HEK293 (cell line): ENCODE measurements at regions of chr6 and their contacts with region 1.

Region 1: GRCh38 chr6:136792410-136793262 is at the start of gene MAP3K5:
- H3K4me3 ChIP-seq: peak within 1 kb of the TSS; percentile 54
- H3K27ac ChIP-seq: peak within 1 kb of the TSS; percentile 89
- H3K4me1 ChIP-seq: peaks cover 13% of the 10 kb centered on the region
- CTCF ChIP-seq: peak; percentile 96

Region 2: GRCh38 chr6:136607932-136608772 is 184.5 kb before region 1 on chr6:
- CTCF ChIA-PET with region 1: interaction called, 25 read pairs
- POLR2A ChIA-PET with region 1: interaction called, 5 read pairs
- H3K4me3 ChIP-seq: no peak overlapping the region
- H3K27ac ChIP-seq: no peak overlapping the region
- H3K4me1 ChIP-seq: peaks cover 26% of the 10 kb centered on the region
- CTCF ChIP-seq: peak; percentile 67

Region 3: GRCh38 chr6:136701045-136701444 is 91.6 kb before region 1 on chr6:
- CTCF ChIA-PET with region 1: interaction called, 13 read pairs
- POLR2A ChIA-PET with region 1: no interaction called
- H3K4me3 ChIP-seq: no peak overlapping the region
- H3K27ac ChIP-seq: no peak overlapping the region
- H3K4me1 ChIP-seq: peaks cover 2% of the 10 kb centered on the region; the same call in 1 of the 2 replicates
- CTCF ChIP-seq: no peak

Region 4: DNA sequence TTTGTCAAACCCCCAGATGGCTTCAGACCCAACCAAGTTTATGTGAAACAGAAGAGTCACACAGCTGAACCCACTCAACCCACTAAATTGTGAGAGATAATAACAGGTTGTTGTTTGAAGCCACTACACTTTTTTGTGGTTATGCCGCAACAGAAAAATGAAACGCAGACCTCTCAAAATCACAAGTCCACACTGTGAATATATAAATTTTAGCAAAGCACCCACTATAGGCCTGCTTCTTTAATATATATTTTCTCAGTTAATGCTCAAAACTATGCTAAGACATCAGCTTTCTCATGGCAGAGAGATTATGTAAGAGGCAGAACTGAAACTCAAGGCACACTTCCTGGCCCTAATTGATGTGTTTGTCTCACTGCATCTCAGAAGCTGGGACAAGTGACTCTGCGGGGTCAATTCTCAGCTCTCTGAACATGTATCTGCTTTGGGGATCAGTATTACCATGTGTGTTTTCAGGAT is 28.1 kb before region 1 on chr6:
- CTCF ChIA-PET with region 1: interaction called, 11 read pairs
- POLR2A ChIA-PET with region 1: no interaction called
- H3K4me3 ChIP-seq: no peak overlapping the region
- H3K27ac ChIP-seq: no peak overlapping the region
- H3K4me1 ChIP-seq: peaks cover 13% of the 10 kb centered on the region
- CTCF ChIP-seq: no peak

Region 5: DNA sequence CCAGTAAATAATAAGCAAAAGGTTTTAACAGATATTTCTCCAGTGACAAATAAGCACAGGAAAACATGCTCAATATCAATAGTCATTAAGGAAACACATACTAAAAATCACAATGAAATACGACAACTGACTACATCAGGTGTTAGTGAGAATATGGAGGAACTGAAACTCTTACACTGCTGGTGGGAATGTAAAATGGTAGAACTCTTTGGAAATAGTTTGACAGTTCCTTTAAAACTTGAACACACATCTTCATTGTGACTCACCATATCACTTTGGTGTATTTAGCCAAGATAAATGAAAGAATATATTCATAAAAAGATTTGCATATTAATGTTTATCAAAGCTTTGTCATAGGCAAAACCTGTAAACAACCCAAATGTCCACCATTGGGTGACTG is 11.0 kb after region 1 on chr6:
- CTCF ChIA-PET with region 1: interaction called, 22 read pairs
- POLR2A ChIA-PET with region 1: interaction called, 5 read pairs
- H3K4me3 ChIP-seq: no peak overlapping the region
- H3K27ac ChIP-seq: no peak overlapping the region
- H3K4me1 ChIP-seq: no peaks in the 10 kb centered on the region
- CTCF ChIP-seq: no peak

Region 6: DNA sequence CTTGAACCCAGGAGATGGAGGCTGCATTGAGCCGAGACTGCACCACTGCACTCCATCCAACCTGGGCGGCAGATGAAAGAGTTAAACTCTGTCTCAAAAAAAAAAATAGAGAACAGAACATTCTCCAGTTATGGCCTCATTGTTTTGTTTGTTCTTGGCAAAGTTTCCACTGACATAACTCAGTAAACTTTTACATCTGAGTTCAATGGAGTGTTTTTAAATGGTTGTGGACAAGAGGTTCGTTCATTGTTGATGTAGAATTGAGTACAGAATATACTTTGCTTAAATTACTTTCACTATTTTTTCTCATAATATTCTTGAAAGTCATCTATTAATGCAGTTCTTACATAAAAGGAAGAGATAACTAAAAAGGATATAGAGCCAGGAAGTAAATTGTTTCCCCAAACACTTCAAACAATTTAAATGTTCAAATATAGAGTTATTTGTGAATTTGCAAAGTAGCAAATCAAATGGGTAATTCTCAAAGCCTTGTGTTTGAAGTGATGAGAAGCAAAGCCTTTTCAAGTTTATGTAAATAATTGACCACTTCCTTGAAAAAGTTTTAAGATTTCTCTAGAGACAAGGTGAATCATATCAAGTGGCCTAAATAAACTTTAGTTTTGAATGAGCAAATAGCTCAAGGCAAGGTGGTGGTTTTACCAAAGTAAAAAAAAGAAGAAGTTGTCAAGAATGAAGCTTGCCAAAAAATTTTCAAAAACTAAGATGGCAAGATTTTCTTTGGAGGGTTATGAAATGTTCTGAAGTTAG is 468.9 kb after region 1 on chr6:
- CTCF ChIA-PET with region 1: no interaction called
- POLR2A ChIA-PET with region 1: no interaction called
- H3K4me3 ChIP-seq: no peak overlapping the region
- H3K27ac ChIP-seq: no peak overlapping the region
- H3K4me1 ChIP-seq: 0 out of 2 replicates have a peak, but pooled peaks cover 3% of the 10 kb centered on the region
- CTCF ChIP-seq: no peak